Caco-2 (cell line): ENCODE measurements at regions of chr7 and their contacts with region 1.

Region 1: GRCh38 chr7:158587162-158588084 is at the start of gene PTPRN2:
- DNase-seq: peak in 1 of 2 experiments; percentile 70
- H3K4me3 ChIP-seq: peak within 1 kb of the TSS; percentile 50
- H3K4me3 Mint-ChIP-seq: peak within 1 kb of the TSS; percentile 72
- H3K27ac Mint-ChIP-seq: no peak within 1 kb of the TSS
- H3K4me1 ChIP-seq: peaks cover 21% of the 10 kb centered on the region
- H3K4me1 Mint-ChIP-seq: peaks cover 10% of the 10 kb centered on the region
- H3K27me3 ChIP-seq: no peaks in the 10 kb centered on the region
- H3K27me3 Mint-ChIP-seq: peaks cover 2% of the 10 kb centered on the region
- CTCF ChIP-seq: no peak
- total RNA-seq, gene PTPRN2: 1.4 and 2.6 TPM in 2 replicates

Region 2: DNA sequence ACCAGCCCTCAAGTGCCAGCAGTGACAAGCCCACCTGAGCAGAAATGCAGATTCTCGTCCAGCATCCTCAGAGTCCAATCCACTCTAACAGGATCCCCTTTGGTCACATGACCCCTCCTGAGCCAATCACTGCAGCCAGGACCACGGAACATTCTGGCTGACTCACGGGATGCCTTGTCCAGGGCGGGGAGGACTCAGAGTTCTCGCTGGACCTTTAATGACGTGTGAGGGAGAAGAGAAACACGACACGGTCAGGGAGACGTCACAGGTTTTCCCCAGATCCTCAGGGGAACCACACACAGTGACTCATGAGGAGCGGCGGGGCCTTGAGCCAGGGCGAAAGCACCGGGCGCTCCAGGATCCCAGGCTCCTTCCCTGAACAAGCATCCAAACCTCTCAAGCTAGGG is 155.5 kb before region 1 on chr7:
- CTCF ChIA-PET with region 1: no interaction called
- POLR2A ChIA-PET with region 1: no interaction called
- intact Hi-C with region 1: loop called (anchors 5 kb)
- DNase-seq: peak; percentile 65 to 80
- H3K4me3 ChIP-seq: peak overlapping the region; percentile 22
- H3K4me3 Mint-ChIP-seq: peak overlapping the region; percentile 75
- H3K27ac Mint-ChIP-seq: peak overlapping the region; percentile 94
- H3K4me1 ChIP-seq: peaks cover 12% of the 10 kb centered on the region; the same call in 1 of the 2 replicates
- H3K4me1 Mint-ChIP-seq: peaks cover 7% of the 10 kb centered on the region
- H3K27me3 ChIP-seq: no peaks in the 10 kb centered on the region
- H3K27me3 Mint-ChIP-seq: no peaks in the 10 kb centered on the region
- CTCF ChIP-seq: no peak

Region 3: DNA sequence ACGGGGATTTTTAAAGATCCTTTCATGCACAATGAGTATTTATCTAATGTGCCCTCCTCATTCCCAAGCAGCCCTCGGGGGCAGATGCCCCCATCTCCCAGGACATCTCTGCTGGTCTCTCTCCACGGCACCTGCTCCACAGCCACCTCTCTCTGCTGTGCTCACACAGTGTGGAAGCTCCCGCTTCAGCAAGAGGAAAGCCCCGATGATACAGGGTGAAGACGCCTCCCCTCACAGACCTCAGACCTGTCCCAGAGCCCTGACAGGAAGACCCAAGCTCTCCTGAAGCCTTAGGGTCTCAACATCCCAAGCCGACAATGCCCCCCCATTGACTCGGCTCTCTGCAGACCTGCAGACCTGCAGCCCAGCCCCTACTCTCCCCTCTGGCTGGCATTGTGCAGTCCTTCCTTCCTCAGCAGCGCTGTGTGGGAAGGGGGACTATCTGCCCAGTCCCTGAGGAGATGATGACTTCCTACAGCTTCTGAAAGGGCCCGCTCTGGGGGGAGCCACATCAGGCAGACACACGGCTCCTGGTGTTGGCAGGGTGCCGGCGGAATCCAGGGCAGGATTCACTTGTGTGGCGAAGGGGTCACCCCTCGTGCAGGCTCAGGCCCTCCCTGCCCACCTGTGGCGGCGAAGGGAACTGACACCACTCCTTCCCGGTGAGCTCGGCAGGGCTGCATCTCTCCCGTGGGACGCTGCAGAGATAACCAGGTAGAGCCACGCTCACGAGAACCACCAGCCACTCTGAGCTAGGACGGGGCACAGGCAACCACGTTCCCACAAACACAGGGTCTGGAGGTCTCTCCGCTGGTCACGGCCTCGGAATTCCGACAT is 61.6 kb before region 1 on chr7:
- CTCF ChIA-PET with region 1: no interaction called
- POLR2A ChIA-PET with region 1: no interaction called
- intact Hi-C with region 1: loop called (anchors 10 kb)
- DNase-seq: no peak
- H3K4me3 ChIP-seq: no peak overlapping the region
- H3K4me3 Mint-ChIP-seq: no peak overlapping the region
- H3K27ac Mint-ChIP-seq: no peak overlapping the region
- H3K4me1 ChIP-seq: peaks cover 14% of the 10 kb centered on the region
- H3K4me1 Mint-ChIP-seq: peaks cover 13% of the 10 kb centered on the region
- H3K27me3 ChIP-seq: no peaks in the 10 kb centered on the region
- H3K27me3 Mint-ChIP-seq: no peaks in the 10 kb centered on the region
- CTCF ChIP-seq: no peak